ENCODE measurements at regions of chr2 and their contacts with region 1.

Region 1: GRCh38 chr2:191165176-191165643 is 14.4 kb upstream of the STAT4 start:
- DNase-seq: peak; percentile 46
- H3K4me3 Mint-ChIP-seq: no peak overlapping the region
- H3K27ac Mint-ChIP-seq: peak overlapping the region; percentile 65
- H3K4me1 Mint-ChIP-seq: peaks cover 21% of the 10 kb centered on the region
- H3K27me3 Mint-ChIP-seq: peaks cover 2% of the 10 kb centered on the region

Region 2: GRCh38 chr2:191195021-191195420 is 29.8 kb after region 1 on chr2:
- CTCF ChIA-PET with region 1: interaction called, 10 read pairs
- intact Hi-C with region 1: no loop called
- DNase-seq: no peak
- H3K4me3 Mint-ChIP-seq: no peak overlapping the region
- H3K27ac Mint-ChIP-seq: peak overlapping the region; percentile 99
- H3K4me1 Mint-ChIP-seq: peaks cover 58% of the 10 kb centered on the region
- H3K27me3 Mint-ChIP-seq: no peaks in the 10 kb centered on the region

Region 3: GRCh38 chr2:191302459-191303139 is 137.4 kb after region 1 on chr2:
- CTCF ChIA-PET with region 1: interaction called, 7 read pairs
- intact Hi-C with region 1: loop called (anchors 1 kb)
- DNase-seq: no peak
- H3K4me3 Mint-ChIP-seq: no peak overlapping the region
- H3K27ac Mint-ChIP-seq: no peak overlapping the region
- H3K4me1 Mint-ChIP-seq: no peaks in the 10 kb centered on the region
- H3K27me3 Mint-ChIP-seq: no peaks in the 10 kb centered on the region

Region 4: GRCh38 chr2:191501561-191502168 is 336.5 kb after region 1 on chr2:
- CTCF ChIA-PET with region 1: interaction called, 18 read pairs
- intact Hi-C with region 1: loop called (anchors 1 kb)
- DNase-seq: no peak
- H3K4me3 Mint-ChIP-seq: no peak overlapping the region
- H3K27ac Mint-ChIP-seq: no peak overlapping the region
- H3K4me1 Mint-ChIP-seq: no peaks in the 10 kb centered on the region
- H3K27me3 Mint-ChIP-seq: peaks cover 3% of the 10 kb centered on the region

Region 5: DNA sequence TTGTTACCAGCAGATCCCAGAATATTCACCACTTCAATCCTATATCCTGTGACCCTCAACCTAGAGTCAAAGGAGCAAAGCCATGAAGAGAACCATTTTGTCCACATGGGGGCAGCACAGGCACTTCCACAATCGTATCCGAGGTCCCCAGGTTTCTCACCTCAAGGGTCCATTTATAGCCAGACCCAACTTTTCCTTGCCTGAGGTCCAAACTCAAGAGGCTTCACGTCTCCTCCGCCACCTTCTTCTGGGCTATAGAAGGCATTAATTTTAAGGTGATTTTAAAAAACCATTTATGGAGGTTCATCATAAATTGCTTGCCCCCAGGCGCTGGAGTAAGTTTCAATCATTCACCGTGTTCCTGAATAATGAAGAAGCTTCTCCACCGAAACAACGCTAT is 401.1 kb after region 1 on chr2:
- CTCF ChIA-PET with region 1: interaction called, 3 read pairs
- intact Hi-C with region 1: loop called (anchors 1 kb)
- DNase-seq: peak; percentile 83
- H3K4me3 Mint-ChIP-seq: no peak overlapping the region
- H3K27ac Mint-ChIP-seq: no peak overlapping the region
- H3K4me1 Mint-ChIP-seq: peaks cover 20% of the 10 kb centered on the region
- H3K27me3 Mint-ChIP-seq: peaks cover 11% of the 10 kb centered on the region

Region 6: DNA sequence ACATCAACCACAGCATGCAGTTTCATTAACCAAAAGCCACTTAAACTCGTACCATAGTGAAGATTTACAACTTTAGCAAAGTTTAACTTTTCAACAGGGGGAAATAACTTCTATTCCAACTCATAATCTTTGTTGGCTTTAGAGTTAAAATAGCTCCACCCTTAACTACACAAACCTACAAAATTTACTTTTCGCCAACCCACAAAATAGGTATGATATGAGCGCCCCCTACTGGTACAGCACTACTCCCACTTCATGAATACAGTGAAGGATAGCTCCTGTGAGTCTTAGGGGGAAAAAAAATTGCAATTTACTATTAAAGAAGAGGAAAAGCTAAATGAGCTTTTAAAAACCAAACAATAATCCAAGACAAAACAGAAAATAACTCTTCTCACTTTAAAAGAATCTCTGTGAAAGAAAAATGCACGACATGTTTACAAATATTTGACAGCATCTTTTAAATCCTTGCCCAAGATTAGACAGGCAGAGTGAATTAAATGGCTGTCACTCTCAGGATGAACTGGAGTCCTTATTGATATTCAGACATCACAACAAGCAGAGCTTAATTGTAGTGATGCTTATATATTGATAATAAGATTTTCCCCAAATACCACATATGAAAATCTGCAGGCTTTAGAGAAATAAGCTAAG is 997.3 kb after region 1 on chr2:
- CTCF ChIA-PET with region 1: interaction called, 4 read pairs
- intact Hi-C with region 1: loop called (anchors 1 kb)
- DNase-seq: peak; percentile 83
- H3K4me3 Mint-ChIP-seq: no peak overlapping the region
- H3K27ac Mint-ChIP-seq: no peak overlapping the region
- H3K4me1 Mint-ChIP-seq: peaks cover 11% of the 10 kb centered on the region
- H3K27me3 Mint-ChIP-seq: peaks cover 9% of the 10 kb centered on the region

Measured in activated naive CD4-positive, alpha-beta T cell treated with anti-CD3 and anti-CD28 coated beads for 36 hours (primary cell).